GM18951 (cell line): ENCODE measurements at regions of chr4 and their contacts with region 1.

Region 1: GRCh38 chr4:78951862-78952472 is 12.7 kb upstream of the PAQR3 start:
- POLR2A ChIP-seq: no peak

Region 2: DNA sequence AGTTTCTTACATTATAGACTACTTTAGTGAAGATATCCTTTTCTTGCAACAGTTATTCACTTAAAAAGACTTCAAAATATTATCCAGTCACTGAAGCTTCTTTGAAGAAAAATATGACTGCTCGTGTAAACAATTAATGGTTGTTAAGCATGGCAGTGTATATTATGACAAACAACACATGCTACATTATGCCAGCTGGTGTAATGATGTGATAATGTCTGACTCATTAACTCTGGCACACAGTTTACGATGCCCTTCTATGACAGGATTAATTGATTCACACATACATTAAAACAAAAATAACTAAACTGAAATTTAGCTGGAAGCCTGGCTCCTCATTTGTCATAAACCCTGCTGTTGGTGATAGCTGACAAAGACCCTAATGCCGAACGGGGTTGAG is 433.7 kb after region 1 on chr4:
- in situ Hi-C with region 1: loop called (anchors 25 kb)
- POLR2A ChIP-seq: no peak

Region 3: DNA sequence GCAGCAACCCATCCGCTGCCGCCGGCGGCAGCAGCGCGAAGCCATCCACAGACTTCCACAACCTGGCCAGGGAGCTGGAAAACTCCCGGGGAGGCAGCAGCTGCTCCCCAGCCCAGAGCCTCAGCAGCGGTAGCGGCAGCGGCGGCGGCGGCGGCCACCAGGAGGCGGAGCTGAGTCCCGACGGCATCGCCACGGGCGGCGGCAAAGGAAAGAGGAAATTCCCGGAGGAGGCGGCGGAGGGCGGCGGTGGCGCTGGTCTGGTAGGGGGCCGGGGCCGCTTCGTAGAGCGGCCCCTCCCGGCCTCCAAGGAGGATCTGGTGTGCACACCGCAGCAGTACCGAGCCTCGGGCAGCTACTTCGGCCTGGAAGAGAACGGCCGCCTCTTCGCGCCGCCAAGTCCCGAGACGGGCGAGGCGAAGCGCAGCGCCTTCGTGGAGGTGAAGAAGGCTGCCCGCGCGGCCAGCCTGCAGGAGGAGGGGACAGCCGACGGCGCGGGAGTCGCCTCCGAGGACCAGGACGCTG is 1250.3 kb after region 1 on chr4:
- in situ Hi-C with region 1: loop called (anchors 25 kb)
- POLR2A ChIP-seq: no peak